Dorsolateral prefrontal cortex (tissue), 120 donors: ENCODE measurements at regions of chr7 and their contacts with region 1.

Region 1: GRCh38 chr7:92134271-92135051 is at the start of gene CYP51A1:
- DNase-seq: peak; percentile 88 to 97 (median 94)
- H3K4me3 ChIP-seq: peak within 1 kb of the TSS; percentile 66 to 100 (median 95)
- H3K27ac ChIP-seq: peak within 1 kb of the TSS; percentile 85 to 100 (median 97)
- H3K27me3 ChIP-seq: no peaks in the 10 kb centered on the region
- CTCF ChIP-seq: peak in 33 of 56 donors; percentile 1 to 51 (median 25)
- total RNA-seq, gene CYP51A1: 49.1 to 122 (median 85.7) TPM

Region 2: GRCh38 chr7:91940572-91941341 is 193.7 kb before region 1 on chr7 and contains the start of gene AKAP9:
- intact Hi-C with region 1: loop called in 1 of 2 experiments (anchors 5 kb)
- DNase-seq: peak; percentile 70 to 94 (median 84)
- H3K4me3 ChIP-seq: peak within 1 kb of the TSS; percentile 54 to 98 (median 87)
- H3K27ac ChIP-seq: peak within 1 kb of the TSS; percentile 77 to 99 (median 94)
- H3K27me3 ChIP-seq: no peaks in the 10 kb centered on the region
- CTCF ChIP-seq: peak in 15 of 56 donors; percentile 5 to 35 (median 11)
- total RNA-seq, gene AKAP9: 64.7 to 107 (median 85.5) TPM

Region 3: GRCh38 chr7:92178927-92179924 is 44.8 kb after region 1 on chr7 and contains the start of gene LRRD1:
- intact Hi-C with region 1: loop called (anchors 2 to 5 kb)
- DNase-seq: peak; percentile 79 to 94 (median 87)
- H3K4me3 ChIP-seq: peak within 1 kb of the TSS; percentile 52 to 88 (median 73)
- H3K27ac ChIP-seq: peak within 1 kb of the TSS; percentile 13 to 98 (median 90)
- H3K27me3 ChIP-seq: no peaks in the 10 kb centered on the region
- CTCF ChIP-seq: peak; percentile 86 to 100 (median 98)
- total RNA-seq, gene LRRD1: 0.21 to 4.2 (median 0.92) TPM in 117 of 120 experiments, not detected in the others

Region 4: GRCh38 chr7:92421676-92422435 is 287.4 kb after region 1 on chr7:
- intact Hi-C with region 1: loop called in 1 of 2 experiments (anchors 5 kb)
- DNase-seq: no peak
- H3K4me3 ChIP-seq: no peak overlapping the region
- H3K27ac ChIP-seq: no peak overlapping the region
- H3K27me3 ChIP-seq: peaks cover 0 to 7% (median 0%) of the 10 kb centered on the region in 45 donors
- CTCF ChIP-seq: no peak